CD8-positive, alpha-beta T cell (primary cell): ENCODE measurements at regions of chr6 and their contacts with region 1.

Region 1: GRCh38 chr6:117449549-117450439 is 24.1 kb upstream of the ROS1 start:
- DNase-seq: peak; percentile 20 to 82 (median 65)
- ATAC-seq: peak; percentile 58
- H3K4me3 ChIP-seq: no peak overlapping the region
- H3K4me3 Mint-ChIP-seq: no peak overlapping the region
- H3K27ac ChIP-seq: no peak overlapping the region
- H3K27ac Mint-ChIP-seq: no peak overlapping the region
- H3K4me1 ChIP-seq: no peaks in the 10 kb centered on the region
- H3K4me1 Mint-ChIP-seq: no peaks in the 10 kb centered on the region
- H3K27me3 ChIP-seq: peaks cover 0 to 3% of the 10 kb centered on the region in 2 experiments
- H3K27me3 Mint-ChIP-seq: peaks cover 26% of the 10 kb centered on the region
- CTCF ChIP-seq: peak; percentile 82

Region 2: GRCh38 chr6:116714761-116715160 is 735.0 kb before region 1 on chr6:
- CTCF ChIA-PET with region 1: no interaction called
- POLR2A ChIA-PET with region 1: no interaction called
- intact Hi-C with region 1: no loop called
- DNase-seq: no peak
- ATAC-seq: no peak
- H3K4me3 ChIP-seq: no peak overlapping the region
- H3K4me3 Mint-ChIP-seq: no peak overlapping the region
- H3K27ac ChIP-seq: no peak overlapping the region
- H3K27ac Mint-ChIP-seq: no peak overlapping the region
- H3K4me1 ChIP-seq: no peaks in the 10 kb centered on the region
- H3K4me1 Mint-ChIP-seq: peaks cover 14% of the 10 kb centered on the region
- H3K27me3 ChIP-seq: no peaks in the 10 kb centered on the region
- H3K27me3 Mint-ChIP-seq: no peaks in the 10 kb centered on the region
- CTCF ChIP-seq: no peak

Region 3: DNA sequence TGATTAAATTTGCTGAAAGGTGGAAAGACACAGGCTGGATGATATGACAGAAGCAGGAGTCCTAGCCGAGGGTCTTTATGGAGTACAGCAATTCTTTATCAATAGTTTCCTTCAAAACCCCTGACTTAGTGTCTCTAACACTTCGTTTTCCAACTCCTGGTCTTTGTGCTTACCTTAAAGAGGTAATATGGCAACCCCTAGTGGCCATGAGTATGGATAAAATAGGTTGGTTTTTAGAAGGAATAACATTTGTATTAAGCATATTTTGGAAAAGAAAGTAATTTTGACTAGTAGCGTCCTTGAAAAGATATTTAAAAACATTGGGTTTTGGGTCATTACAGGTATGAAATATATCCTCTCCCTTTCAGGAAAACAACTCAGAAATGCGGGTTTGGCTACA is 132.5 kb before region 1 on chr6:
- CTCF ChIA-PET with region 1: no interaction called
- POLR2A ChIA-PET with region 1: no interaction called
- intact Hi-C with region 1: no loop called
- DNase-seq: no peak
- ATAC-seq: no peak
- H3K4me3 ChIP-seq: no peak overlapping the region
- H3K4me3 Mint-ChIP-seq: no peak overlapping the region
- H3K27ac ChIP-seq: no peak overlapping the region
- H3K27ac Mint-ChIP-seq: no peak overlapping the region
- H3K4me1 ChIP-seq: no peaks in the 10 kb centered on the region
- H3K4me1 Mint-ChIP-seq: no peaks in the 10 kb centered on the region
- H3K27me3 ChIP-seq: no peaks in the 10 kb centered on the region
- H3K27me3 Mint-ChIP-seq: peaks cover 18% of the 10 kb centered on the region
- CTCF ChIP-seq: no peak

Region 4: DNA sequence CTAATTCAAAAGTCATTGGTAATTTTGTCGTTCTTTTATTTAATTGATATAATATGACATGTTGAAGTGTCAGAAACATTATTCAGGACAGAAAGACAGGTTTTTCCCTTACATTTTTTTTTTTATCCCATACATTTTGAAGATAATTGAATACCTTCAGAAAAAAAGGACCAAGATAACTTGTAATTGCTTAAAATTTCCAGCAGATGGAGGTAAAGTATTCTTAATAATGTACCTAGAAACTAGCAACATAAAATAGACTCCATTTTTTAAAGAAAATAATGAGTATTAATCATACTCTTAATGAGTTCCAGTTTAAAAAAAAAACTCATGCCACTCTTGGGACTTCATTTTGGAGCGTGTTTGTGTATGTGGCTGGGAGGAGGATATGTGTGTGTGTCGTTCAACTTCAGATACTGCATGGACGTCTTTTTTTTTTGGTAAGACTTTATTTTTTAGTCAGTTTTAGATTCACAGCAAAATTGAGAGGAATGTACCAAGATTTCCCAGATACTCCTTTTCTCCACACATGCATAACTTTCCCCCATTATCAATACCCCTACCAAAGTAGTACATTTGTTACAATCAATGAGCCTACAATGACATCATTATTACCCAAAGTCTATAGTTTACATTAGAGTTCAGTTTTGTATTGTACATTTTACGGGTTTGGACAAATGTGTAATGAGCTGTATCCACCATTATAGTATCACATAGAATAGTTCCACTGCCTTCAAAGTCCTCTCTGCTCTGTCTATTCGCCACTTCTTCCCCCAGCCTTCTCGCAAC is 103.5 kb before region 1 on chr6:
- CTCF ChIA-PET with region 1: no interaction called
- POLR2A ChIA-PET with region 1: no interaction called
- intact Hi-C with region 1: loop called in 1 of 2 experiments (anchors 10 kb)
- DNase-seq: peak in 2 of 9 experiments; percentile 14 to 36
- ATAC-seq: no peak
- H3K4me3 ChIP-seq: no peak overlapping the region
- H3K4me3 Mint-ChIP-seq: no peak overlapping the region
- H3K27ac ChIP-seq: no peak overlapping the region
- H3K27ac Mint-ChIP-seq: no peak overlapping the region
- H3K4me1 ChIP-seq: no peaks in the 10 kb centered on the region
- H3K4me1 Mint-ChIP-seq: no peaks in the 10 kb centered on the region
- H3K27me3 ChIP-seq: no peaks in the 10 kb centered on the region
- H3K27me3 Mint-ChIP-seq: peaks cover 11% of the 10 kb centered on the region
- CTCF ChIP-seq: peak; percentile 72

Region 5: GRCh38 chr6:117423754-117424153 is 26.0 kb before region 1 on chr6:
- CTCF ChIA-PET with region 1: no interaction called
- POLR2A ChIA-PET with region 1: no interaction called
- intact Hi-C with region 1: no loop called
- DNase-seq: no peak
- ATAC-seq: no peak
- H3K4me3 ChIP-seq: no peak overlapping the region
- H3K4me3 Mint-ChIP-seq: no peak overlapping the region
- H3K27ac ChIP-seq: no peak overlapping the region
- H3K27ac Mint-ChIP-seq: no peak overlapping the region
- H3K4me1 ChIP-seq: no peaks in the 10 kb centered on the region
- H3K4me1 Mint-ChIP-seq: no peaks in the 10 kb centered on the region
- H3K27me3 ChIP-seq: peaks cover 0 to 3% of the 10 kb centered on the region in 2 experiments
- H3K27me3 Mint-ChIP-seq: peaks cover 17% of the 10 kb centered on the region
- CTCF ChIP-seq: no peak

Region 6: GRCh38 chr6:117482240-117483003 is 32.6 kb after region 1 on chr6 and contains the start of gene DCBLD1:
- CTCF ChIA-PET with region 1: interaction called, 7 read pairs
- POLR2A ChIA-PET with region 1: no interaction called
- intact Hi-C with region 1: loop called in 1 of 2 experiments (anchors 2 kb)
- DNase-seq: peak in 8 of 9 experiments; percentile 21 to 75 (median 47)
- ATAC-seq: peak; percentile 66
- H3K4me3 ChIP-seq: peak within 1 kb of the TSS; percentile 72 to 74
- H3K4me3 Mint-ChIP-seq: peak within 1 kb of the TSS; percentile 90
- H3K27ac ChIP-seq: no peak within 1 kb of the TSS
- H3K27ac Mint-ChIP-seq: peak within 1 kb of the TSS; percentile 47
- H3K4me1 ChIP-seq: peaks cover 16% of the 10 kb centered on the region
- H3K4me1 Mint-ChIP-seq: peaks cover 17% of the 10 kb centered on the region
- H3K27me3 ChIP-seq: no peaks in the 10 kb centered on the region
- H3K27me3 Mint-ChIP-seq: peaks cover 31% of the 10 kb centered on the region
- CTCF ChIP-seq: no peak
- total RNA-seq, gene DCBLD1: 2.0 to 2.1 TPM

Region 7: DNA sequence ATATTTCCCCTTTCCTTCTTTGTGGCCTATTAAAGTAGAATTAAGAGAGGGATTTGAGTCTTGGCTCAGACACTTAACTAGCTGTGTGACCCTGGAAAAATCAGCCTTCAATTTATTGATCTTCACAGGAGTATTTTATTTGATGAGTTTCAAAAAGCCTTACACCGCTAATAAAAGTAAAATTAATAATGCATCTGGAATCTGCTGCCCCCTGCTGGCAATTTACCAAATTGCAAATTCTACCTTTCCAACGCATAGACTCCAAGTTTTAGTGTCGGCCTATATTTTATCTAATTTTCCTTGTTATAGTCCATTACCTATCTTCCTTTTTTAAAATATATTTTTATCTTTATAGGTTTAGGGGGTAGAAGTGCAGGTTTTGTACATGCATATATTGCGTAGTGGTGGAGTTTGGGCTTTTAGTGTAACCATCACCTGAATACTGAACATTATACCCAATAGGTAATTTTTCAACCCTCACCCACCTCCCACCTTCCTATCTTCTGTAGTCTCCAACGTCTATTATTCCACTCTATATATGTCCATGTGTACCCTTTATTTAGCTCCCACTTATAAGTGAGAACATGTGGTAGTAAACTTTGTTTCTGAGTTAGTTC is 106.2 kb after region 1 on chr6:
- CTCF ChIA-PET with region 1: interaction called, 152 read pairs
- POLR2A ChIA-PET with region 1: interaction called, 7 read pairs
- intact Hi-C with region 1: loop called (anchors 1 kb)
- DNase-seq: peak in 8 of 9 experiments; percentile 26 to 78 (median 65)
- ATAC-seq: peak; percentile 55
- H3K4me3 ChIP-seq: no peak overlapping the region
- H3K4me3 Mint-ChIP-seq: no peak overlapping the region
- H3K27ac ChIP-seq: no peak overlapping the region
- H3K27ac Mint-ChIP-seq: no peak overlapping the region
- H3K4me1 ChIP-seq: peaks cover under 1% of the 10 kb centered on the region
- H3K4me1 Mint-ChIP-seq: peaks cover 8% of the 10 kb centered on the region
- H3K27me3 ChIP-seq: no peaks in the 10 kb centered on the region
- H3K27me3 Mint-ChIP-seq: no peaks in the 10 kb centered on the region
- CTCF ChIP-seq: peak; percentile 97

Region 8: GRCh38 chr6:117615894-117616390 is 166.1 kb after region 1 on chr6:
- CTCF ChIA-PET with region 1: interaction called, 10 read pairs
- POLR2A ChIA-PET with region 1: no interaction called
- intact Hi-C with region 1: no loop called
- DNase-seq: no peak
- ATAC-seq: no peak
- H3K4me3 ChIP-seq: no peak overlapping the region
- H3K4me3 Mint-ChIP-seq: no peak overlapping the region
- H3K27ac ChIP-seq: peak overlapping the region in 1 of 2 experiments; percentile 87
- H3K27ac Mint-ChIP-seq: no peak overlapping the region
- H3K4me1 ChIP-seq: peaks cover 16% of the 10 kb centered on the region
- H3K4me1 Mint-ChIP-seq: peaks cover 20% of the 10 kb centered on the region
- H3K27me3 ChIP-seq: no peaks in the 10 kb centered on the region
- H3K27me3 Mint-ChIP-seq: peaks cover 4% of the 10 kb centered on the region
- CTCF ChIP-seq: no peak